ENCODE measurements at regions of chr3 and their contacts with region 1.

Region 1: DNA sequence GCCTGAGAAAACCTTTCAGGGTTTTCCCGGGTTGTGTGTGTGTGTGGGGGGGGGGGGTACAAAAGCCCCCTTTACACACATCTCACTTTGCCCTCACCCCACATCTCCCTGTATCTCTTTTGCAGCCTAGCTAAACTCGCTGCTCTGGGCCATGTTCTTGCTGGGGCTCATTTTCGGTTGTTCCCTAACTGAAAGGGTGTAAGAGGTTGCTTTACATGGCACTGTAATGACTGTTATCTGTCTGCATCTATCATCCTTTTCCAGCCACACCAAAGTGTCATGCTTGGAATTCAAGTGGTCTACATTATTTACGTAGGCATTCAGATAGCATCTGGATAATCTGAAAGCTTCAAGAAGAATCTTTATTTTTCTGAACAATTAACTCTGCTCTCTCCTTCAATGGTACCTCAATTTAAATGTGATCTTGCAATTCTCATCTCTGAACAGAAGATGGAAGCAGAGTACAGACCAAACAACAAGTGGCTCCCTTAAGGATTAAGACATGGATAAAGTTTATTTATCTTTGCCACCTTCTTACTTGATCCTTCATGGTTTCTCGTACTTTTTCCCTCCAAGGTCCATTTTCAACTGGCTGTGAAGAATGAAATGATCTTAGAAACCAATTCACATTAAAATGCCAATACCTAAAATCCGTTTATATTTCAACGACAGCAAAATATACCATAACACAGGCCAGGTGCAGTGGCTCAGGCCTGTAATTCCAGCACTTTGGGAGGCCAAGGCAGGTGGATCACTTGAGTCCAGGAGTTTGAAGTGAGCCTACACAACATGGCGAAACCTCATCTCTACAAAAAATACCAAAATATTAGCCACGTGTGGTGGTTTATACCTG is 34.9 kb downstream of the DCLK3 start:
- H3K4me3 Mint-ChIP-seq: no peak overlapping the region
- H3K27ac Mint-ChIP-seq: no peak overlapping the region
- H3K4me1 Mint-ChIP-seq: peaks cover 5% of the 10 kb centered on the region
- H3K27me3 Mint-ChIP-seq: peaks cover 6% of the 10 kb centered on the region

Region 2: GRCh38 chr3:36786921-36787890 is 57.8 kb after region 1 on chr3:
- intact Hi-C with region 1: loop called (anchors 5 kb)
- H3K4me3 Mint-ChIP-seq: no peak overlapping the region
- H3K27ac Mint-ChIP-seq: peak overlapping the region; percentile 85
- H3K4me1 Mint-ChIP-seq: peaks cover 67% of the 10 kb centered on the region
- H3K27me3 Mint-ChIP-seq: peaks cover 5% of the 10 kb centered on the region

Region 3: GRCh38 chr3:36868614-36869436 is 139.4 kb after region 1 on chr3:
- intact Hi-C with region 1: loop called (anchors 1 kb)
- H3K4me3 Mint-ChIP-seq: no peak overlapping the region
- H3K27ac Mint-ChIP-seq: no peak overlapping the region
- H3K4me1 Mint-ChIP-seq: peaks cover 5% of the 10 kb centered on the region
- H3K27me3 Mint-ChIP-seq: no peaks in the 10 kb centered on the region

Region 4: DNA sequence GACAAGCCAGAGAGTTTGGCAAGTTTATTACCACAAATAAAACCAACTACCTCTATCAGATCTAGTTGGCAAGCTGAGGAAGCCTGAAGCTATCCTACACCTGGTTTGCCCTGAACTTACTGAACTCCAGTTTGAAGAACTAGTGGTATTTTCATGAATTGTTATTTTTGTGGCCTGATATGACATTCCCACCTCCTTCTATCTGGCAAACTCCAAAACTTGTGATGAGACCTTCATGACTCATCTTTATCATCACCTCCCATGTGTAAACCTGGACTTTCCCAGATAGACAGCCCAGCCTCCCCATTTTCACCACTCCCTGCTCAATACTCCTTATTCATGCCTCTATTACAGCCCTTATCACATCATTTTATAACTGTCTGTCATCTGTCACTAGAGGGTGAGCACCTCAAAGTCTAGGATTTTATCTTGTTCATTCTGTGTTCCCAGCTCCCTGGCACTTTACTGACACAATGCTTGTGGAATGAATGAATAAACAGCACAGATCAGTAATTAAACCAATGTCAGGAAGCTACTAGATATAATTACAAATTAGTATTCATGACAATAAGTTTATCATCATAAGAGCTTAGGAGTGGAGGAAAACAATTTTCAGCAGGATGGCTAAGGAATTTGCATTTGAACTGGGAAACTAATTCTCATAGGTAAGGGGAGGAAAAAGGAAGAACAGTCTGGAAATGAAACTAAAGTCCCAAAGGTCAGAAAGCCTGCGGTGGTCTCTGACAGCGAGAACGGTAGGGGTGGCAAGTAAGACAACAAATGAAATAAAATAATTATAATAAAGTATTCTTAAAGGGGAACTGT is 228.6 kb after region 1 on chr3:
- intact Hi-C with region 1: loop called (anchors 1 kb)
- H3K4me3 Mint-ChIP-seq: no peak overlapping the region
- H3K27ac Mint-ChIP-seq: no peak overlapping the region
- H3K4me1 Mint-ChIP-seq: peaks cover 15% of the 10 kb centered on the region
- H3K27me3 Mint-ChIP-seq: no peaks in the 10 kb centered on the region